ENCODE measurements at regions of chr19 and their contacts with region 1.

Region 1: DNA sequence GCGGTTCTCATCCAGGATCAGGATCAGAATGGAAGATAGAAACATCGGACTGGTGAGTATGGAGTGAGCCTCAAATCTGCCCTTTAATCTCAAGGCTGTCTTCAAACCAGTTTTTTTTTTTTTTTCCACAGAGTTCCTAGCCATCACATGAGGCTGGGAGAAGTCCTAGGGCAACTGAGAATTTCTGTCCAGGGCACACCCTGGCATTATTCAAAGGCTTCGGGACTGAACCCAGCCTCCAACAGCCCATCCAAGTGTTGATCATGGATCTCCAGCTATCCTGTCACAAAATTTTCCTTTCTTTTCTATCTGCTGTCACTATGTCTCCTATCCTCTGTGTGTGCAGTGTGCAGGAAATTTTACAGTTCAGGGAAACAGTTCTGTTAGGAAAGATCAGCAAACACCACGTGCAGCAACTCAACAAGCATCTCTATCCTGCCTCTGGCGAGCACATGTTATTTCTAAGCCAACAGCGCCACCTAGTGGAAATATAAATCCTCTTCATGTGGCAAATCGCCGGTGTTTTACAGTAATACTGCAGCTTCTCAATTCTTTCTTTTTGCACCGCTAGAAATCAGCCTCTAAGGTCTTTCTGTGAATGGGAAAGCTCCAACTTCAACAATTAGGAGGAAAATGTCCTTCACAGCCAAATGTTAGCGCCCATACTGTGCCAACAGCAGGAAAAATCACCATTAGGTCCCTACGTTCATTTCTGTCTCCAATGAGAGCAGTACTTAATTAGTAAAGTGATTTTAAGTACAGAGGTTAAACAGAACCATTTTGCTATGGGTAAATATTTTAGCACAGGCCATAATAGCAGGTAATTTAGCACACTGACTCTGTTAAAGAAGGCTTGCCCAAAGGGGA is 21.4 kb upstream of the ZNF181 start:
- DNase-seq: peak; percentile 50
- H3K4me3 ChIP-seq: no peak overlapping the region
- H3K27ac ChIP-seq: no peak overlapping the region
- H3K4me1 ChIP-seq: no peaks in the 10 kb centered on the region
- H3K27me3 ChIP-seq: no peaks in the 10 kb centered on the region
- CTCF ChIP-seq: peak; percentile 78 to 87 (median 80)
- EP300 ChIP-seq: no peak
- POLR2A ChIP-seq: no peak

Region 2: GRCh38 chr19:34501339-34502320 is 211.0 kb before region 1 on chr19:
- in situ Hi-C with region 1: loop called in 3 of 4 experiments (anchors 5 to 25 kb)
- intact Hi-C with region 1: loop called (anchors 5 kb)
- DNase-seq: peak; percentile 94
- H3K4me3 ChIP-seq: no peak overlapping the region
- H3K27ac ChIP-seq: peak overlapping the region in 1 of 4 donors; percentile 23
- H3K4me1 ChIP-seq: peaks cover 0 to 4% (median 2%) of the 10 kb centered on the region in 4 donors
- H3K27me3 ChIP-seq: peaks cover 11% of the 10 kb centered on the region
- CTCF ChIP-seq: peak; percentile 97 to 99 (median 99)
- EP300 ChIP-seq: no peak
- POLR2A ChIP-seq: no peak

Region 3: GRCh38 chr19:34639491-34640085 is 73.0 kb before region 1 on chr19:
- in situ Hi-C with region 1: loop called in 3 of 4 experiments (anchors 5 kb)
- intact Hi-C with region 1: loop called (anchors 5 kb)
- DNase-seq: peak; percentile 40
- H3K4me3 ChIP-seq: no peak overlapping the region
- H3K27ac ChIP-seq: no peak overlapping the region
- H3K4me1 ChIP-seq: no peaks in the 10 kb centered on the region
- H3K27me3 ChIP-seq: no peaks in the 10 kb centered on the region
- CTCF ChIP-seq: peak; percentile 70 to 76 (median 74)
- EP300 ChIP-seq: no peak
- POLR2A ChIP-seq: no peak

Region 4: GRCh38 chr19:34766386-34766785 is 53.8 kb after region 1 on chr19:
- in situ Hi-C with region 1: no loop called
- intact Hi-C with region 1: no loop called
- DNase-seq: no peak
- H3K4me3 ChIP-seq: no peak overlapping the region
- H3K27ac ChIP-seq: no peak overlapping the region
- H3K4me1 ChIP-seq: no peaks in the 10 kb centered on the region
- H3K27me3 ChIP-seq: no peaks in the 10 kb centered on the region
- CTCF ChIP-seq: no peak
- EP300 ChIP-seq: no peak
- POLR2A ChIP-seq: no peak

Measured in transverse colon (tissue), 4 donors.